Aorta (tissue), 5 donors: ENCODE measurements at regions of chr5 and their contacts with region 1.

Region 1: GRCh38 chr5:37005946-37006540 is 129.5 kb downstream of the NIPBL start:
- DNase-seq: no peak
- ATAC-seq: no peak
- H3K4me3 ChIP-seq: no peak overlapping the region
- H3K27ac ChIP-seq: no peak overlapping the region
- H3K4me1 ChIP-seq: no peaks in the 10 kb centered on the region
- H3K27me3 ChIP-seq: no peaks in the 10 kb centered on the region

Region 2: GRCh38 chr5:36728697-36729543 is 277.1 kb before region 1 on chr5:
- intact Hi-C with region 1: loop called in 1 of 2 experiments (anchors 5 kb)
- DNase-seq: no peak
- ATAC-seq: no peak
- H3K4me3 ChIP-seq: no peak overlapping the region
- H3K27ac ChIP-seq: no peak overlapping the region
- H3K4me1 ChIP-seq: no peaks in the 10 kb centered on the region
- H3K27me3 ChIP-seq: peaks cover 0 to 1% of the 10 kb centered on the region in 2 donors

Region 3: GRCh38 chr5:36739751-36740221 is 266.3 kb before region 1 on chr5:
- intact Hi-C with region 1: loop called in 1 of 2 experiments (anchors 10 kb)
- DNase-seq: peak in 1 of 2 donors; percentile 79
- ATAC-seq: peak; percentile 60
- H3K4me3 ChIP-seq: no peak overlapping the region
- H3K27ac ChIP-seq: no peak overlapping the region
- H3K4me1 ChIP-seq: peaks cover 0 to 2% of the 10 kb centered on the region in 2 donors
- H3K27me3 ChIP-seq: no peaks in the 10 kb centered on the region